CD4-positive, alpha-beta memory T cell (primary cell): ENCODE measurements at regions of chr2 and their contacts with region 1.

Region 1: GRCh38 chr2:64488050-64488974 is 34.4 kb downstream of the LGALSL start:
- DNase-seq: peak; percentile 59 to 69 (median 65)
- H3K4me3 ChIP-seq: no peak overlapping the region
- H3K4me3 Mint-ChIP-seq: peak overlapping the region in 5 of 8 donors; percentile 1 to 31 (median 7)
- H3K27ac ChIP-seq: no peak overlapping the region
- H3K27ac Mint-ChIP-seq: peak overlapping the region in 1 of 7 donors; percentile 60
- H3K4me1 ChIP-seq: peaks cover 16% of the 10 kb centered on the region
- H3K4me1 Mint-ChIP-seq: peaks cover 7 to 20% (median 13%) of the 10 kb centered on the region in 4 donors
- H3K27me3 ChIP-seq: no peaks in the 10 kb centered on the region
- H3K27me3 Mint-ChIP-seq: peaks cover 0 to 2% of the 10 kb centered on the region in 2 donors

Region 2: GRCh38 chr2:63698825-63699548 is 789.3 kb before region 1 on chr2:
- CTCF ChIA-PET with region 1: no interaction called
- POLR2A ChIA-PET with region 1: no interaction called
- intact Hi-C with region 1: loop called (anchors 10 kb)
- DNase-seq: peak in 4 of 5 donors; percentile 15 to 45 (median 30)
- H3K4me3 ChIP-seq: no peak overlapping the region
- H3K4me3 Mint-ChIP-seq: no peak overlapping the region
- H3K27ac ChIP-seq: no peak overlapping the region
- H3K27ac Mint-ChIP-seq: no peak overlapping the region
- H3K4me1 ChIP-seq: no peaks in the 10 kb centered on the region
- H3K4me1 Mint-ChIP-seq: no peaks in the 10 kb centered on the region
- H3K27me3 ChIP-seq: no peaks in the 10 kb centered on the region
- H3K27me3 Mint-ChIP-seq: no peaks in the 10 kb centered on the region

Region 3: DNA sequence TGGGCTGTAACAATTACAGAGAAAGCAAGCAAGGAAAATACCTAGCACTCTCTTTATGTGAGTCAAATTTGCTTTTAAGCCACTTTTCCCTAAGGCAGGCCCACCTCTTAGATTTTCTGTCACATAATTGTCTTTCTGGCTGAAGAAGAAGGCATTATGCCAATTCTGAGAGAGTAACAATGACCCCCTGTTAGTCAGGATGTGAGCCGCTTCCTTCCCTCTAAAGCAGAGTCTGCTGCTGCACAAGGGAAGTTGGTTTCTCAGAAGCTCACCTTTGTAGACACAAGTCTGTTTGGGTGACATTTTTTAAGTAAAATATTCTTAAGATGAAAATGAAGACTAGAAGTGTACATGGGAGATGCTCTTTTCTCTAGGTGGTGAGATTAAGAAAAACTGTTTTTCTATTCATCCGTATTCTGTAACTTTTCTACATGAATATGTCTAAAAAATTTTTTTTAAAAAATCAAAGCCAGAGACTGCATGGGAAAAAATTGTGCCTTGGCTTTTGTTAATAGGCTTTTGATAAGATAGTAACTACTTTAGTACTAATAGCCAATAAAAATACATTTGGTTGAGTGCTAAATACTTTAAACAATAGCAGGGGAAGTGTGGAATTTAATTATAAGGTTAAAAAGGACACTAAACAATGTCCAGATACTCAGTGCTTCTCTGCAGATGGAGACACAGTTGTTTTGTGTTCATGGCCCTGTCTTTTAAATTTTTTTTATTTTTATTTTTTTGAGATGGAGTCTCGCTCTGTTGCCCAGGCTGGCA is 435.7 kb before region 1 on chr2:
- CTCF ChIA-PET with region 1: interaction called, 39 read pairs
- POLR2A ChIA-PET with region 1: no interaction called
- intact Hi-C with region 1: loop called (anchors 1 kb)
- DNase-seq: peak in 2 of 5 donors; percentile 11 to 17
- H3K4me3 ChIP-seq: no peak overlapping the region
- H3K4me3 Mint-ChIP-seq: peak overlapping the region in 1 of 8 donors; percentile 30
- H3K27ac ChIP-seq: no peak overlapping the region
- H3K27ac Mint-ChIP-seq: peak overlapping the region in 4 of 7 donors; percentile 16 to 34 (median 24)
- H3K4me1 ChIP-seq: peaks cover 28% of the 10 kb centered on the region
- H3K4me1 Mint-ChIP-seq: peaks cover 16 to 42% (median 29%) of the 10 kb centered on the region in 4 donors
- H3K27me3 ChIP-seq: no peaks in the 10 kb centered on the region
- H3K27me3 Mint-ChIP-seq: no peaks in the 10 kb centered on the region

Region 4: DNA sequence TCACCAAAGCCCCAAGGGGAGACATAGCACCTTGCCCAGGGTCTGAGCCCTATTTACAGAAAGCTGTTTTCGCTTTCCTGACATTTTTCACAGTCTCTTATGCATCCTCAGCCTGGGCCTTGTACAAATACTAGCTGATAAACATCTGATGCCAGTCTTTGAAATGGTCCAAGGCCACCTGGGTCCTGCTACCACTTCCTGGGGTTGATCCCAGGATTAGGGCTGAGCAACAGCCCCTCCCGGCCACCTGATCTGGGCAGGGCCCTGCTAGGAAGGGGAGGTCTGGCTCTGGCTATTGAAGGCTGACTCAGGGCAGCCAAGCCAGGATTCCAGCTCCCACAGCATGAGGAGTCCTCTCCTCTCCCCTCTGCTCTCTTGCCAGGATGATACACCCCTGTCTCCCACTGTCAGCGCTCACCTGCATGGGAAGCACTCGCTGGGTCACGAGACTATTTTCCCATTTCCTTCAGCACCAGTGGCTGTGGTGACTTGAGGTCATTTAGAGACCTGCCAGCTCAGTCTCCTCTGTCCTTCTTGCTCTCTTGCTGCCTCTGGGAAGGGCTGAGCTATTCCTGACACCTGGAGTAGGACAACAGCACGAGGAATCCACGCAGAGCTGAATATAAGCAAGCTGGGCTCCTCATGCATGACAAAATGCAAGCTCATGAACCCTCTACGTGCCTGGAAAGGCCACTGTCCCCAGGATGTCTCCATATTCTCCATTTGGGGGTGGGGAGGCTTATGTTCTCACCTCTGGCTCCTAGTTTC is 87.4 kb before region 1 on chr2:
- CTCF ChIA-PET with region 1: no interaction called
- POLR2A ChIA-PET with region 1: no interaction called
- intact Hi-C with region 1: no loop called
- DNase-seq: no peak
- H3K4me3 ChIP-seq: no peak overlapping the region
- H3K4me3 Mint-ChIP-seq: no peak overlapping the region
- H3K27ac ChIP-seq: no peak overlapping the region
- H3K27ac Mint-ChIP-seq: peak overlapping the region in 1 of 7 donors; percentile 27
- H3K4me1 ChIP-seq: no peaks in the 10 kb centered on the region
- H3K4me1 Mint-ChIP-seq: no peaks in the 10 kb centered on the region
- H3K27me3 ChIP-seq: no peaks in the 10 kb centered on the region
- H3K27me3 Mint-ChIP-seq: peaks cover 0 to 2% of the 10 kb centered on the region in 2 donors

Region 5: GRCh38 chr2:64474121-64474571 is 14.2 kb before region 1 on chr2:
- CTCF ChIA-PET with region 1: interaction called, 40 read pairs
- POLR2A ChIA-PET with region 1: no interaction called
- intact Hi-C with region 1: no loop called
- DNase-seq: no peak
- H3K4me3 ChIP-seq: no peak overlapping the region
- H3K4me3 Mint-ChIP-seq: peak overlapping the region in 1 of 8 donors; percentile 11
- H3K27ac ChIP-seq: no peak overlapping the region
- H3K27ac Mint-ChIP-seq: no peak overlapping the region
- H3K4me1 ChIP-seq: no peaks in the 10 kb centered on the region
- H3K4me1 Mint-ChIP-seq: peaks cover 0 to 1% (median 0%) of the 10 kb centered on the region in 4 donors
- H3K27me3 ChIP-seq: no peaks in the 10 kb centered on the region
- H3K27me3 Mint-ChIP-seq: peaks cover 0 to 2% of the 10 kb centered on the region in 2 donors

Region 6: DNA sequence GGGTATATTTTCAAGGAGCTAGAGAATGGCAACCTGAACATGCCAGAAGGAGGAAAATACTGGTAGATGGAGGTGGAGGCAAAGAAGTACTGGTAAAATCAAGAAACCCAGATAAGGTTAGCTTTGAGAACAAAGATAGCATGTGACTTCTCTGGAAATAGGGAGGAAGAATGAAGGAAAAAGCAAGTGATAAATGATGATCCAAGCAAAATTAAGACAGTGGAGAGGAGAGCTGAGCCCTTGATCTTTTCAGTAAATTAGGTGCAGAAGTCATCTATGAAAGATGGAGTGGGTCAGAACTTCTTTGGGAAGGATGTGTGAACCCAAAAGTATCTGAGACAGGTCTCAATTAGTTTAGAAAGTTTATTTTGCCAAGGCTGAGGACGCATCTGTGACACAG is 10.1 kb after region 1 on chr2:
- CTCF ChIA-PET with region 1: interaction called, 27 read pairs
- POLR2A ChIA-PET with region 1: no interaction called
- intact Hi-C with region 1: no loop called
- DNase-seq: no peak
- H3K4me3 ChIP-seq: no peak overlapping the region
- H3K4me3 Mint-ChIP-seq: no peak overlapping the region
- H3K27ac ChIP-seq: no peak overlapping the region
- H3K27ac Mint-ChIP-seq: no peak overlapping the region
- H3K4me1 ChIP-seq: no peaks in the 10 kb centered on the region
- H3K4me1 Mint-ChIP-seq: no peaks in the 10 kb centered on the region
- H3K27me3 ChIP-seq: no peaks in the 10 kb centered on the region
- H3K27me3 Mint-ChIP-seq: peaks cover 3 to 5% of the 10 kb centered on the region in 2 donors

Region 7: DNA sequence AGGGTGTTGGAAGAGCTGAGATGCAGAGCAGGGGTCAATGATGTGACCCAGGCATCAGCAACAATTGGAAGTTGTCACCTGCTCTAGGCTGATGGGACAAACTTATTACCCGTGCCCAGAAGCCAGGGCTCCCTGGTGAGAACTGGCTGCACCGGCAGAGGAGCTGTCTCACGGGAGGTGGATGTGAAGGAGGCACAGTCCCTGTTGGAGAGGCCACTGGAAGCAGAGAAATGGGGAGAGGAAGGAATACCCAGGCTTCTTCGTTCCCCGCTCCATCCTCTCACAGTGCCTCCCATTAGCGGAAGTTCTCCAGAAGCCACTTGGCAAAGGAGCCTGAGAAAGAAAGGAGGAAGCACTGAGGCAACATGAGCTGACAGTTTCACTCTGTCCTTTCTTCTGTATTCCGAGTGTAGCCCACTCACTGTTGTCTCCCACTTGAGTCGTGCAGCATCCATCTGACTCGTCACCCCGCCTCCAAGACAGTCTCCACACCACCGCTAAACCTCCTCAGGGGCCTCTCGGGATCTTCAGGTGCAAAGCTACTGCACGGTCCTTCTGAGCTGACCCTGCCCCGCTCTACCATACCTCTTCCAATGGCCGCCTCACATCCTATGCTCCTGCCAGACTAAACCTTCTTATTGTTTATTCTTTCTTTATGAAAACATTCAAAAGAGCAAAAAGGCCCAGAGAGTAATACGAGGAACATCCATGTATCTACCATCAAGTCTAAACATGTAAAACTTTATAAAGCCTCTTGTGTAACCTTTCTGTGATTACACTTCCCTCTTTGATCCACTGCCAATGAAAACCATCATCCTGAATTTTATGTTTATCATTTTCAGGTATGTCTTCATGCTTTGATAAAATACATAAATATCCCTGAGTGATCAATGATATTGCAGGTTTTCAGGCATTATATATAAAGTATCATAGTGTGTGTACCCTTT is 16.7 kb after region 1 on chr2:
- CTCF ChIA-PET with region 1: interaction called, 25 read pairs
- POLR2A ChIA-PET with region 1: no interaction called
- intact Hi-C with region 1: no loop called
- DNase-seq: no peak
- H3K4me3 ChIP-seq: no peak overlapping the region
- H3K4me3 Mint-ChIP-seq: no peak overlapping the region
- H3K27ac ChIP-seq: no peak overlapping the region
- H3K27ac Mint-ChIP-seq: no peak overlapping the region
- H3K4me1 ChIP-seq: no peaks in the 10 kb centered on the region
- H3K4me1 Mint-ChIP-seq: no peaks in the 10 kb centered on the region
- H3K27me3 ChIP-seq: no peaks in the 10 kb centered on the region
- H3K27me3 Mint-ChIP-seq: peaks cover 8 to 9% of the 10 kb centered on the region in 2 donors